ENCODE measurements at regions of chr2 and their contacts with region 1.

Region 1: DNA sequence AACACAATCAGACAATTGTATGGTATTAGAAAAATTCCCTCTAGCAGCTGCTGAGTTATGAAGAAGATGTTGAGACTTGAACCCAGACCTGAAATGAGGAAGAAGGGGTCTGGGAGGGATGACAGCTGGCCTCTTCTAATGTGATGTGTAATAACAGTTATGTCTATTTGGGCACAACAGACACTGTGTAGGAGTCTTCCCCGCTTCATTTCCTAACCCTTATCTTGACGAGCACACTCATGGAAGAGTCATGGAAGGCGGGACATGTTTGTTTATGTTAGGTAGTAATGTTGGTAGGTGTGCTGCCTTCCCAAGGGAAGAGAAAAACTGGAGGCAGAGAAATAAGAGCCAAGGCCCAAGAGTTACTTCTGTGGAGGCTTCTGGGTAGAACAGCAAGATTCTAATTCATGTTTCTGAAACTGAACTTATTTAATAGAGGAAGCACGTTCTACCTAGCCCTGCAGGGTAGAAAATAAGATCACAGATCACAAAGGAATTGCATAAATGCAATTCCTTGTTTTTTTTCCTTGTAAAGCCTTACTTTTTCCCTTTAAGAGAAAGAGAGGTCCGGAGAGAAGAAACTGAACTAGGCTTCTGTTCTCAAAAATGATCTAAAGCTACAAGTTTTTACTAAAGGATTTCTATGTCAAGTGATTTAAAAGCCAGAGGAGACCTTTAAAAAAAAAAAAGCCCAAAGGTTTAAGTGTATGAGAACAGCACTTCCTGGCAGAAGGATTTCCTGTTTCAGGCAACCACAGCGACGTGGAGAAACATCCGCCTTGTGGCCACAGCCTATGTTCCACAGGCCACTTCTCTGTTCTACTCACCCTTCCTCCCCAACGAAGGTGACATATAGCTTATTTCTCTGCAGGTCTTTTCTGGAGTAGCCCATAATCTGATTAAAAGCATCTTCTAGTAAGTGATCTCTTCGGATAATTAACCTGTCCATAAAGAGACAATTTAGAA is 68.5 kb upstream of the STK17B start:
- DNase-seq: peak; percentile 67
- ATAC-seq: peak; percentile 61
- H3K4me3 Mint-ChIP-seq: peak overlapping the region; percentile 41
- H3K27ac Mint-ChIP-seq: peak overlapping the region; percentile 100
- H3K4me1 Mint-ChIP-seq: peaks cover 89% of the 10 kb centered on the region
- H3K27me3 Mint-ChIP-seq: no peaks in the 10 kb centered on the region
- CTCF ChIP-seq: no peak

Region 2: GRCh38 chr2:196088203-196088602 is 151.7 kb before region 1 on chr2:
- CTCF ChIA-PET with region 1: no interaction called
- POLR2A ChIA-PET with region 1: no interaction called
- intact Hi-C with region 1: no loop called
- DNase-seq: no peak
- ATAC-seq: no peak
- H3K4me3 Mint-ChIP-seq: no peak overlapping the region
- H3K27ac Mint-ChIP-seq: no peak overlapping the region
- H3K4me1 Mint-ChIP-seq: peaks cover 10% of the 10 kb centered on the region
- H3K27me3 Mint-ChIP-seq: no peaks in the 10 kb centered on the region
- CTCF ChIP-seq: no peak

Region 3: GRCh38 chr2:196119926-196120325 is 120.0 kb before region 1 on chr2:
- CTCF ChIA-PET with region 1: no interaction called
- POLR2A ChIA-PET with region 1: interaction called, 12 read pairs
- intact Hi-C with region 1: no loop called
- DNase-seq: no peak
- ATAC-seq: no peak
- H3K4me3 Mint-ChIP-seq: no peak overlapping the region
- H3K27ac Mint-ChIP-seq: no peak overlapping the region
- H3K4me1 Mint-ChIP-seq: no peaks in the 10 kb centered on the region
- H3K27me3 Mint-ChIP-seq: no peaks in the 10 kb centered on the region
- CTCF ChIP-seq: no peak

Region 4: DNA sequence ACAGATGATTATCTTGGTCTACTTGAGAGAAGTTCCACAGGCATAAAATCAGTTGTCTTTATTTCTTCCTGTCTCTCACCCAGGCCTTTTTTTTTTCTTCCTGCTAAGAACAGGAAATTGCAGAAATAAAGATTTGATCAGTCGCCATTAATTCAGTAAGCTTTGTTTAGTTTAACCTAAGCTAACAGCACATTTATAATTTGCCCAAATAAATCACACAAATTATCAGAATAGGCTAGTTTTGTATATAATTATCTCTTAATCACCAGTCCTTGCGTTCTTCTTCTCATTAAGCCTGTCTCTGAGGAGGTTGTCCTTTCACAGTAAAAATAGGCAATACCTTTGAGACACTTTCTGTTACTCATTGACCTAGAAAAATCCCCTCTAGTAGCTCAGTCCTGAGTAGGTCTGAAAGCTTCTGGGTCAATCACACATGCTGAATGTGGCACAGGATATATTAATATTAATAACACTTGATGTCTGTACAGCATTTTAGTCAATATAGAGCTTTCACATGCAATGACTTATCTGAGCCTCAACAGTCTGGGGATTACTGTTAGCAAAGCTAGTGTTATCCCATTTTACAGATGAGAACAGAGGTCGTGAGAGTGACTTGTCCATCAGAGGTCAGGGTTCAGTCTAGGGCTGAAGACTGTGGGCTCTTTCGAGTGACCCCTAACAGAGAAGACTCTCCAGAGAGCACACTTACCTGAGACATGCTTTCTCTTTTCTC is 57.3 kb before region 1 on chr2:
- CTCF ChIA-PET with region 1: interaction called, 17 read pairs
- POLR2A ChIA-PET with region 1: interaction called, 543 read pairs
- intact Hi-C with region 1: loop called (anchors 1 kb)
- DNase-seq: no peak
- ATAC-seq: peak; percentile 83
- H3K4me3 Mint-ChIP-seq: peak overlapping the region; percentile 67
- H3K27ac Mint-ChIP-seq: peak overlapping the region; percentile 95
- H3K4me1 Mint-ChIP-seq: peaks cover 77% of the 10 kb centered on the region
- H3K27me3 Mint-ChIP-seq: no peaks in the 10 kb centered on the region
- CTCF ChIP-seq: no peak

Region 5: DNA sequence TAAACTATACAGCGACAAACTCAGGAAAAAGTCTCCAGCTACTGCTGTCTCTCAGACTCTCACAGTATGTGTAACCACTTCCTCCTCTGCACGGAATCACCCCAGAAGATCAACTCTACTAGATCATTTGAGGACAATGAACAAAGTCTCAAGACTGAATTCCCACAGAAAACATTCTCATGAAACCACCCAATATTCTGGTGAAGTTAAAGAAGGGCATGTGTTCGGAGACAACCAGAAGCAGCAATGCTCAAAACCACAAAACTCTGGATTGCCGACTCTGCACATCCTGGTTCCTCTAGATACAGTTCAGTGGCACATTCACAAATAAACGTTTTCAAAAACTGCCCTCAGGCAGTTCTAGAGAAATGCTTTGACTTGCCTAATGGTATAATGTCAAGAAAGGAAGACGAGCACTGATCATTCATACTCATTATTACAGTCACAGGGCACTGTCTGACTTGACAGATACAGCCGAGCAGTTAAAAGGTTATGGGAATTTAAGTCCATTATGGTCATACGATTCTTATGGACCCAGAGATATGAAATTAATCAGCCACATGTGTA is 23.4 kb after region 1 on chr2:
- CTCF ChIA-PET with region 1: interaction called, 27 read pairs
- POLR2A ChIA-PET with region 1: interaction called, 17 read pairs
- intact Hi-C with region 1: loop called (anchors 1 kb)
- DNase-seq: no peak
- ATAC-seq: peak; percentile 80
- H3K4me3 Mint-ChIP-seq: peak overlapping the region; percentile 71
- H3K27ac Mint-ChIP-seq: peak overlapping the region; percentile 91
- H3K4me1 Mint-ChIP-seq: peaks cover 69% of the 10 kb centered on the region
- H3K27me3 Mint-ChIP-seq: no peaks in the 10 kb centered on the region
- CTCF ChIP-seq: no peak

Region 6: DNA sequence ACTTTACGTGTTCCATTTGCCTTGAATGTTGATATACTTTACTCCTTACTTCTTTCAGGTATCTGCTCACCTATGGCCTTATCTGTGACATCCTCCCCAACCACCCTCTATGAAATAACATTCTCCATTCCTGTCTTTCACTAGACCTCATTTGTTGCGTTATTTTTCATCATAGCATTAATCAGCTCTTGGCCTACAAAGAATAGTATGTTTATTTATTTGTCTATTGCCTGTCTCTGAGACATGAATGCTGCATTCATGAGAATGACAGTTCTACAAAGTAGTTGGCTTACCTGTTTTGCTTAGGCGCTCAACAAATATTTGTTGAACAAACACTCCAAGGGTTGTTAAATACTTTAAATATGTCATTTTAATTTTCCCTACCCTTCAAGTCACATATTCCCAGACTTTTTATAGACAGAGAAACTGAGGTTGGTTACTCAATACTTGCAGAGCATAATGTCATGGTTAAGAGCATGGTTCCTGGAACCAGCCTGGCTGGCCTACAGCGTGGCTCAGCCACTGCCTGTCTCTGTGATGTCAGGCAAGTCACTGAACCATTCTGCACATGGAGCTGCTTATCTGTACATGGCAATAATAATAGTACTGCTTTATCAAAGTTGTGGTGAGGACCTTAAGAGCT is 51.4 kb after region 1 on chr2:
- CTCF ChIA-PET with region 1: no interaction called
- POLR2A ChIA-PET with region 1: no interaction called
- intact Hi-C with region 1: no loop called
- DNase-seq: no peak
- ATAC-seq: peak; percentile 62
- H3K4me3 Mint-ChIP-seq: no peak overlapping the region
- H3K27ac Mint-ChIP-seq: peak overlapping the region; percentile 74
- H3K4me1 Mint-ChIP-seq: peaks cover 54% of the 10 kb centered on the region
- H3K27me3 Mint-ChIP-seq: no peaks in the 10 kb centered on the region
- CTCF ChIP-seq: no peak

Region 7: GRCh38 chr2:196808083-196808665 is 568.3 kb after region 1 on chr2:
- CTCF ChIA-PET with region 1: no interaction called
- POLR2A ChIA-PET with region 1: interaction called, 10 read pairs
- intact Hi-C with region 1: no loop called
- DNase-seq: no peak
- ATAC-seq: no peak
- H3K4me3 Mint-ChIP-seq: no peak overlapping the region
- H3K27ac Mint-ChIP-seq: no peak overlapping the region
- H3K4me1 Mint-ChIP-seq: no peaks in the 10 kb centered on the region
- H3K27me3 Mint-ChIP-seq: peaks cover 30% of the 10 kb centered on the region
- CTCF ChIP-seq: no peak

Region 8: GRCh38 chr2:196887431-196887830 is 647.5 kb after region 1 on chr2:
- CTCF ChIA-PET with region 1: no interaction called
- POLR2A ChIA-PET with region 1: no interaction called
- intact Hi-C with region 1: no loop called
- DNase-seq: no peak
- ATAC-seq: no peak
- H3K4me3 Mint-ChIP-seq: no peak overlapping the region
- H3K27ac Mint-ChIP-seq: no peak overlapping the region
- H3K4me1 Mint-ChIP-seq: no peaks in the 10 kb centered on the region
- H3K27me3 Mint-ChIP-seq: no peaks in the 10 kb centered on the region
- CTCF ChIP-seq: no peak

Region 9: DNA sequence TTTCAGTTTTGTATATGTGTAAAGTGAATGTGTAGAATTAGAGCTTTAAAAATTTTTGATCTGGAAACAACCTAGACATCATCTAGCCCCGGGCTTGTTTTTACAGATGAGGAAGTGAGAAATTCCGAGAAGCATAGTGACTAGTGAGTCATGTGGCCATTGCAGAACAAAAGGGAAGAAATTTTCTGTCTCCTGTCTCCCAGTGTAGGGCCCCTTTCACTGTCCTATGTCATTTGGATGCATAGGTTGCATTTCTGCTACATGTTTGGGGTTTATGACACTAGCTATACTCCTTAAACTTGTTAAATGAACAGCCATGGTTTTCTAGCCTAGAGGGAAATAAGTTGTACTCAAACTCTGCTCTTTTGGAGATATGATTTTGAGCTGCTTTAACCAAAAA is 1649.1 kb after region 1 on chr2:
- CTCF ChIA-PET with region 1: no interaction called
- POLR2A ChIA-PET with region 1: no interaction called
- intact Hi-C with region 1: no loop called
- DNase-seq: no peak
- ATAC-seq: peak; percentile 68
- H3K4me3 Mint-ChIP-seq: no peak overlapping the region
- H3K27ac Mint-ChIP-seq: no peak overlapping the region
- H3K4me1 Mint-ChIP-seq: peaks cover 5% of the 10 kb centered on the region
- H3K27me3 Mint-ChIP-seq: no peaks in the 10 kb centered on the region
- CTCF ChIP-seq: no peak